Activated CD4-positive, alpha-beta memory T cell treated with anti-CD3 and anti-CD28 coated beads for 36 hours (primary cell): ENCODE measurements at regions of chr10 and their contacts with region 1.

Region 1: GRCh38 chr10:110535958-110536891 is 31.3 kb upstream of the SMC3 start:
- DNase-seq: peak; percentile 91
- H3K4me3 Mint-ChIP-seq: peak overlapping the region; percentile 28
- H3K27ac Mint-ChIP-seq: peak overlapping the region; percentile 79
- H3K4me1 Mint-ChIP-seq: peaks cover 30% of the 10 kb centered on the region
- H3K27me3 Mint-ChIP-seq: no peaks in the 10 kb centered on the region

Region 2: GRCh38 chr10:110076559-110077318 is 459.5 kb before region 1 on chr10:
- CTCF ChIA-PET with region 1: no interaction called
- POLR2A ChIA-PET with region 1: no interaction called
- intact Hi-C with region 1: loop called (anchors 10 kb)
- DNase-seq: no peak
- H3K4me3 Mint-ChIP-seq: peak overlapping the region; percentile 81
- H3K27ac Mint-ChIP-seq: peak overlapping the region; percentile 98
- H3K4me1 Mint-ChIP-seq: peaks cover 84% of the 10 kb centered on the region
- H3K27me3 Mint-ChIP-seq: no peaks in the 10 kb centered on the region

Region 3: GRCh38 chr10:110368002-110368401 is 168.2 kb before region 1 on chr10:
- CTCF ChIA-PET with region 1: no interaction called
- POLR2A ChIA-PET with region 1: no interaction called
- intact Hi-C with region 1: no loop called
- DNase-seq: peak; percentile 38
- H3K4me3 Mint-ChIP-seq: no peak overlapping the region
- H3K27ac Mint-ChIP-seq: peak overlapping the region; percentile 35
- H3K4me1 Mint-ChIP-seq: peaks cover 71% of the 10 kb centered on the region
- H3K27me3 Mint-ChIP-seq: no peaks in the 10 kb centered on the region

Region 4: GRCh38 chr10:110425684-110426293 is 110.4 kb before region 1 on chr10:
- CTCF ChIA-PET with region 1: no interaction called
- POLR2A ChIA-PET with region 1: interaction called, 3 read pairs
- intact Hi-C with region 1: loop called (anchors 1 kb)
- DNase-seq: peak; percentile 88
- H3K4me3 Mint-ChIP-seq: peak overlapping the region; percentile 30
- H3K27ac Mint-ChIP-seq: peak overlapping the region; percentile 96
- H3K4me1 Mint-ChIP-seq: peaks cover 66% of the 10 kb centered on the region
- H3K27me3 Mint-ChIP-seq: no peaks in the 10 kb centered on the region

Region 5: GRCh38 chr10:110522365-110522988 is 13.7 kb before region 1 on chr10:
- CTCF ChIA-PET with region 1: no interaction called
- POLR2A ChIA-PET with region 1: no interaction called
- intact Hi-C with region 1: loop called (anchors 2 kb)
- DNase-seq: peak; percentile 64
- H3K4me3 Mint-ChIP-seq: no peak overlapping the region
- H3K27ac Mint-ChIP-seq: peak overlapping the region; percentile 9
- H3K4me1 Mint-ChIP-seq: peaks cover 45% of the 10 kb centered on the region
- H3K27me3 Mint-ChIP-seq: no peaks in the 10 kb centered on the region

Region 6: GRCh38 chr10:110567201-110568054 is 31.2 kb after region 1 on chr10 and contains the start of gene SMC3:
- CTCF ChIA-PET with region 1: interaction called, 3 read pairs
- POLR2A ChIA-PET with region 1: no interaction called
- intact Hi-C with region 1: loop called (anchors 1 kb)
- DNase-seq: peak; percentile 94
- H3K4me3 Mint-ChIP-seq: peak within 1 kb of the TSS; percentile 93
- H3K27ac Mint-ChIP-seq: peak within 1 kb of the TSS; percentile 97
- H3K4me1 Mint-ChIP-seq: peaks cover 43% of the 10 kb centered on the region
- H3K27me3 Mint-ChIP-seq: peaks cover 10% of the 10 kb centered on the region
- total RNA-seq, gene SMC3: 89.5 to 92.2 TPM